Activated T-helper 1 cell treated with anti-CD3 and anti-CD28 coated beads, Interleukin-12 subunit alpha, Interleukin-12 subunit beta, Interleukin-2, Interleukin-4 antibody, amounts not matched to agents 30 ng/mL and 10 ng/mL and 1 ng/mL, durations not matched to agents 14 hours and 24 hours and 36 hours (primary cell): ENCODE measurements at regions of chr5 and their contacts with region 1.

Region 1: GRCh38 chr5:66840511-66841013 is 244.4 kb downstream of the MAST4 start:
- DNase-seq: peak; percentile 53
- H3K4me3 Mint-ChIP-seq: peak overlapping the region; percentile 38
- H3K27ac Mint-ChIP-seq: peak overlapping the region; percentile 81
- H3K4me1 Mint-ChIP-seq: peaks cover 81% of the 10 kb centered on the region
- H3K27me3 Mint-ChIP-seq: no peaks in the 10 kb centered on the region

Region 2: GRCh38 chr5:66814146-66814991 is 26.2 kb before region 1 on chr5:
- intact Hi-C with region 1: loop called (anchors 1 kb)
- DNase-seq: peak; percentile 47
- H3K4me3 Mint-ChIP-seq: peak overlapping the region; percentile 24
- H3K27ac Mint-ChIP-seq: no peak overlapping the region
- H3K4me1 Mint-ChIP-seq: peaks cover 78% of the 10 kb centered on the region
- H3K27me3 Mint-ChIP-seq: no peaks in the 10 kb centered on the region

Region 3: GRCh38 chr5:66821688-66822429 is 18.7 kb before region 1 on chr5:
- intact Hi-C with region 1: loop called (anchors 2 kb)
- DNase-seq: peak; percentile 56
- H3K4me3 Mint-ChIP-seq: peak overlapping the region; percentile 74
- H3K27ac Mint-ChIP-seq: peak overlapping the region; percentile 93
- H3K4me1 Mint-ChIP-seq: peaks cover 83% of the 10 kb centered on the region
- H3K27me3 Mint-ChIP-seq: no peaks in the 10 kb centered on the region

Region 4: GRCh38 chr5:66891183-66891925 is 50.8 kb after region 1 on chr5:
- intact Hi-C with region 1: no loop called
- DNase-seq: no peak
- H3K4me3 Mint-ChIP-seq: no peak overlapping the region
- H3K27ac Mint-ChIP-seq: no peak overlapping the region
- H3K4me1 Mint-ChIP-seq: peaks cover 24% of the 10 kb centered on the region
- H3K27me3 Mint-ChIP-seq: peaks cover 2% of the 10 kb centered on the region